ENCODE measurements at regions of chr1 and their contacts with region 1.

Region 1: GRCh38 chr1:16440470-16441281 is at the start of gene NECAP2:
- DNase-seq: peak; percentile 94
- H3K4me3 Mint-ChIP-seq: peak within 1 kb of the TSS; percentile 94
- H3K27ac Mint-ChIP-seq: peak within 1 kb of the TSS; percentile 93
- H3K4me1 Mint-ChIP-seq: peaks cover 41% of the 10 kb centered on the region
- H3K27me3 Mint-ChIP-seq: no peaks in the 10 kb centered on the region
- total RNA-seq, gene NECAP2: 107 to 115 TPM

Region 2: GRCh38 chr1:16420424-16421118 is 20.1 kb before region 1 on chr1:
- CTCF ChIA-PET with region 1: interaction called, 11 read pairs
- POLR2A ChIA-PET with region 1: interaction called, 3 read pairs
- DNase-seq: peak; percentile 80
- H3K4me3 Mint-ChIP-seq: peak overlapping the region; percentile 39
- H3K27ac Mint-ChIP-seq: peak overlapping the region; percentile 93
- H3K4me1 Mint-ChIP-seq: peaks cover 37% of the 10 kb centered on the region
- H3K27me3 Mint-ChIP-seq: no peaks in the 10 kb centered on the region

Region 3: DNA sequence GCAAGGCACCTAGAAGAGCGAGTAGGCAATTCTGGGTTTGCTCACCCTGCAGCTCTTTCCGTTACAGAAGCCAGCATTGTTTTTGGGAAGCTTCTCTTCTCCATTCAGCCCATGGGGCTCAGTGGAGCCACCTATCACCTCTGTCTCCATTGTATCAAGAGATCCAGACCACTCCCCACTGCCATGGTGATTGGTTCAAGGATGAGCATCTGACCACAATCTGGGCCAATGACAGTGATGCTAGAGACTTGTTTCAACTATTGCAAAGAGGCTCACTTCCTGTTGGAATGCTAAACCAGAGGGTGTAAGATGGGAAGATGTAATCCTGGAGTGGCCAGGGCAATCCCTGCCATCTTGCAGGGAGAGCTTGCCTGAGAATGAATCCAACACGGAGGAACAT is 10.1 kb before region 1 on chr1:
- CTCF ChIA-PET with region 1: interaction called, 10 read pairs
- POLR2A ChIA-PET with region 1: no interaction called
- DNase-seq: no peak
- H3K4me3 Mint-ChIP-seq: no peak overlapping the region
- H3K27ac Mint-ChIP-seq: no peak overlapping the region
- H3K4me1 Mint-ChIP-seq: peaks cover 3% of the 10 kb centered on the region
- H3K27me3 Mint-ChIP-seq: peaks cover 8% of the 10 kb centered on the region

Region 4: GRCh38 chr1:16458831-16459230 is 18.2 kb after region 1 on chr1:
- CTCF ChIA-PET with region 1: interaction called, 20 read pairs
- POLR2A ChIA-PET with region 1: no interaction called
- DNase-seq: no peak
- H3K4me3 Mint-ChIP-seq: no peak overlapping the region
- H3K27ac Mint-ChIP-seq: no peak overlapping the region
- H3K4me1 Mint-ChIP-seq: no peaks in the 10 kb centered on the region
- H3K27me3 Mint-ChIP-seq: no peaks in the 10 kb centered on the region

Measured in activated CD4-positive, alpha-beta T cell treated with anti-CD3 and anti-CD28 coated beads, Interleukin-2, amount 10 ng/mL, durations not matched to agents 7 days and 5 days (primary cell).